HepG2 (cell line): ENCODE measurements at regions of chr15 and their contacts with region 1.

Region 1: DNA sequence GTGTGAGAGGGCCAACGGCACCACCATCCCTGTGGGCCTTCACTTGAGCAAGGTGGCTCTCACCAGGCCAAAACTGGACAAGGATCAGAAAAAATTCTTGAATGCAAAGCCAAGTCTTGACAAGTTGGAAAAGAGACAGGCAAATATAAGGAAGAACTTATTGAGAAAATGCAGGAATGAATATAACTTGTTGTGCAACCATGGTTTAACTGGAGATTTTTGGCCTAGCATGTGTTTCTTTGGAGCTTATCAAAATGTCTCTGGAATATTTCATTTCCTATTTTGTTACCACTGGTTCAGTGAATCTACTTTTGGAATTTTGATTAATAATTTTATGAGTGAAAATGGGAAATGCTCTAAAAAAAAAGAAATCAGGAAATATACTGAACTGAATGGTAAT is 42.5 kb downstream of the MCTP2 start:
- DNase-seq: no peak
- ATAC-seq: no peak
- H3K4me3 ChIP-seq: no peak overlapping the region
- H3K27ac ChIP-seq: no peak overlapping the region
- H3K4me1 ChIP-seq: no peaks in the 10 kb centered on the region
- H3K27me3 ChIP-seq: no peaks in the 10 kb centered on the region
- CTCF ChIP-seq: no peak
- EP300 ChIP-seq: no peak
- POLR2A ChIP-seq: no peak
- RAD21 ChIP-seq: no peak

Region 2: GRCh38 chr15:94259863-94260262 is 14.0 kb before region 1 on chr15:
- CTCF ChIA-PET with region 1: no interaction called
- POLR2A ChIA-PET with region 1: no interaction called
- in situ Hi-C with region 1: no loop called
- intact Hi-C with region 1: loop called (anchors 1 kb)
- DNase-seq: no peak
- ATAC-seq: no peak
- H3K4me3 ChIP-seq: no peak overlapping the region
- H3K27ac ChIP-seq: no peak overlapping the region
- H3K4me1 ChIP-seq: peaks cover 32% of the 10 kb centered on the region
- H3K27me3 ChIP-seq: no peaks in the 10 kb centered on the region
- CTCF ChIP-seq: no peak
- EP300 ChIP-seq: no peak
- POLR2A ChIP-seq: no peak
- RAD21 ChIP-seq: no peak

Region 3: DNA sequence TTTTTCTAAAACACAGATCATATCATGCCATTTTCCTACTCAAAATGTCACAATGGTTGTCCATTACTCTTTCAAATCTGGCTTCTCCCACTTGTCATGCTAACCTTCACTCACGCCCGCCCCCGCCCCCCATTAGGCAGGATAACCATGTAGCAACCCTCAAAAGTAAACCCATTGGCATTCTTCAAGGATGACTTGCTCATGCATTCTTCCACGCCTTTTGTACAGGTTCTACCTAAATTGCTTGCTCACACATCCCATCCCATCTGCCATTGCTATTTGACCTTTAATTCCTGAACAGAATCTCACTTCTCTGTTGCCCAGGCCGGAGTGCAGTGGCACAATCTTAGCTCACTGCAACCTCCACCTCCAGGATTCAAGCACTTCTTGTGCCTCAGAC is 346.8 kb after region 1 on chr15:
- CTCF ChIA-PET with region 1: no interaction called
- POLR2A ChIA-PET with region 1: no interaction called
- in situ Hi-C with region 1: no loop called
- intact Hi-C with region 1: no loop called
- DNase-seq: no peak
- ATAC-seq: no peak
- H3K4me3 ChIP-seq: no peak overlapping the region
- H3K27ac ChIP-seq: no peak overlapping the region
- H3K4me1 ChIP-seq: no peaks in the 10 kb centered on the region
- H3K27me3 ChIP-seq: no peaks in the 10 kb centered on the region
- CTCF ChIP-seq: no peak
- EP300 ChIP-seq: no peak
- POLR2A ChIP-seq: no peak
- RAD21 ChIP-seq: no peak